Naive thymus-derived CD4-positive, alpha-beta T cell (primary cell): ENCODE measurements at regions of chr10 and their contacts with region 1.

Region 1: GRCh38 chr10:132536971-132537712 is 445 bp upstream of the INPP5A start:
- DNase-seq: peak; percentile 100
- ATAC-seq: peak; percentile 94
- H3K4me3 ChIP-seq: peak overlapping the region; percentile 57
- H3K4me3 Mint-ChIP-seq: peak overlapping the region; percentile 66 to 98 (median 78)
- H3K27ac ChIP-seq: peak overlapping the region; percentile 81
- H3K27ac Mint-ChIP-seq: peak overlapping the region in 3 of 9 donors; percentile 72 to 78 (median 76)
- H3K4me1 ChIP-seq: peaks cover 11 to 41% of the 10 kb centered on the region in 2 donors
- H3K4me1 Mint-ChIP-seq: peaks cover 33 to 53% (median 42%) of the 10 kb centered on the region in 7 donors
- H3K27me3 ChIP-seq: no peaks in the 10 kb centered on the region
- H3K27me3 Mint-ChIP-seq: peaks cover 0 to 27% (median 0%) of the 10 kb centered on the region in 5 donors

Region 2: DNA sequence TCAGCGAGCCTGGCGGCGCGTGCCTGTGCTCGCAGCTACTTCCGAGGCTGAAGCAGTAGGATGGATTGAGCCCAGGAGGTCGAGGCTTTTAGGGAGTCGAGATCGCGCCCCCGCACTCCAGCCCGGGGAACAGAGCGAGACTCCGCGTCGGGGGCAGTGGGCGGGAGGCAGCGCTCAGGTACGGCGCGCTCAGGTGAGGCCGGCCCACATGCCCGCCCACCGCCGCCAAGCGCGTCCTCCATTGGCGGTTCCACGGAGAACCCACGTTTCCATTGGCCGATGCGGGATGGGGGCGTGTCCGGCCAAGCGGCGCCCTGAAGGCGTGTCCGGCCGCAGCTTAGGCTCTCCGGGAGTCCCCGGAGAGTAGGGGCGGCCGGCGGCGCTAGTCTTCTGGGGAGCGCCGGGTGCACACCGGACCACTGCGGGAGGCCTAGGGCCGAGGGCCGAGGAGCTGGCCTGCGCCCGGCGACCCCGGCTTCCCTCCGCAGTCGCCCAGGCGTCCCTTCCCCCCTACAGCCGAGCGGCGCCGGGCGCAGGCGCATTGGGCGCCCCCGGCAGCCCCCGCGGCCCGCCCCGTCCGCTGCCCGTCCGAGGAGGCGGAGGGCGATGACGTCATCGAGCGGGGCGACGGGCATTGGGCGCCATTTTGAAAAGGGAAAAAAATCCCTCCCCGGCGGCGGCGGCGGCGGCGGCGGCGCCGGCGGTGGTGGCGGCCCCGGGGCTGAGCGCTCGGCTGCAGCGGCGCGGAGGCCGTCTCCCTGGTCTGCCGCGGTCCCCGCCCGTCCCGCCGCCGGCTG is 636.6 kb before region 1 on chr10 and contains the start of gene PPP2R2D:
- CTCF ChIA-PET with region 1: no interaction called
- POLR2A ChIA-PET with region 1: no interaction called
- intact Hi-C with region 1: loop called (anchors 1 to 5 kb)
- DNase-seq: peak; percentile 95 to 99 (median 97)
- ATAC-seq: peak; percentile 90
- H3K4me3 ChIP-seq: peak within 1 kb of the TSS; percentile 64
- H3K4me3 Mint-ChIP-seq: peak within 1 kb of the TSS; percentile 90 to 95 (median 92)
- H3K27ac ChIP-seq: peak within 1 kb of the TSS; percentile 94
- H3K27ac Mint-ChIP-seq: peak within 1 kb of the TSS; percentile 86 to 97 (median 93)
- H3K4me1 ChIP-seq: peaks cover 34 to 40% of the 10 kb centered on the region in 2 donors
- H3K4me1 Mint-ChIP-seq: peaks cover 30 to 67% (median 61%) of the 10 kb centered on the region in 7 donors
- H3K27me3 ChIP-seq: no peaks in the 10 kb centered on the region
- H3K27me3 Mint-ChIP-seq: peaks cover 0 to 18% (median 0%) of the 10 kb centered on the region in 5 donors
- total RNA-seq, gene PPP2R2D: 37.1 to 61.3 (median 40.1) TPM

Region 3: DNA sequence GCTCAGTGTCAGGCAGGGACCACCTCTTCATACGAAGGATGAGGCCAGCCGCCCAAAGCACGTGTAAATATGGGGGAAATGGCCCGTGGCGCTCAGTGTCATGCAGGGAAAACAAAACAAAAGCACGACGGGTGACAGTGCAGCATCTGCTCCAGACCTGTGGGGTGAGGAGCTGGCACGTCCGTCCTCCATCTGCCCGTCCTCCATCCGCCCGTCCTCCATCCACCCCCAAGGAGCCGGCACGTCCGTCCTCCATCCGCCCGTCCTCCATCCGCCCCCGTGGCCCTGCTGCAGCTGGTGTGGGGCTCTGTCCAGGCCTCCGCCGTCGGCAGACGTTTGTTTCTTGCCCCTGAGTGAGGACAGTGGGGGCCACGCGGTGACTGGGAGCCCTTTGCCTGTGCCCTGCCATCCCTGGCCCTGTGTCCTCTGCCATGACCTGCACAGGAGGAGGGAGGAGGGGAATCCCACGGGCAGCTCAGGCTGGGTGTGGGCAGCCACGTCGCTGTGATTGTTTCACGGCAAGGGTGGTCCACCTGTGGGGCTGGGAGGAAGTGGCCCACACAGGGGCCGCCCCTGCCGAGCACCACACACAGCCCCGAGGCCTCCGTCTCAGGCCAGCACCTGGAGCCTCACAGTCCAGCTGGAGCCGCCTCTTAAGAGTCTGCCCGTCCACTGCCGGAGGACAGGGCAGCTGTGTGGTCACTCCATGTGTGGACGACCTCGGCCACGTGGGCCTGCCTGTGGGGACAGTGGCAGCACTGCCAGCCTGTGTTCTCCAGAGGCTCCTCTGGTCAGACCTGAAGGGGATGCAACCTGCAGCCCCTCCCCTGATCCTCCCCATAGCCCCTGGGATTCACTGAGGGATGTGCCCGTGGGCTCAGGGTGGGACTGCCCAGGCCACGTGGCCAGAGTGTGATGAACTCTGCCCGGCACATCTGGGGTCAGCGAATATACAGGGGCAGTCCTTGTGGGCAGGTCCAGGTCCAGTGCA is 388.6 kb before region 1 on chr10:
- CTCF ChIA-PET with region 1: no interaction called
- POLR2A ChIA-PET with region 1: no interaction called
- intact Hi-C with region 1: no loop called
- DNase-seq: no peak
- ATAC-seq: peak; percentile 2
- H3K4me3 ChIP-seq: no peak overlapping the region
- H3K4me3 Mint-ChIP-seq: no peak overlapping the region
- H3K27ac ChIP-seq: no peak overlapping the region
- H3K27ac Mint-ChIP-seq: no peak overlapping the region
- H3K4me1 ChIP-seq: no peaks in the 10 kb centered on the region
- H3K4me1 Mint-ChIP-seq: peaks cover 0 to 2% (median 0%) of the 10 kb centered on the region in 7 donors
- H3K27me3 ChIP-seq: no peaks in the 10 kb centered on the region
- H3K27me3 Mint-ChIP-seq: peaks cover 0 to under 1% (median 0%) of the 10 kb centered on the region in 5 donors

Region 4: DNA sequence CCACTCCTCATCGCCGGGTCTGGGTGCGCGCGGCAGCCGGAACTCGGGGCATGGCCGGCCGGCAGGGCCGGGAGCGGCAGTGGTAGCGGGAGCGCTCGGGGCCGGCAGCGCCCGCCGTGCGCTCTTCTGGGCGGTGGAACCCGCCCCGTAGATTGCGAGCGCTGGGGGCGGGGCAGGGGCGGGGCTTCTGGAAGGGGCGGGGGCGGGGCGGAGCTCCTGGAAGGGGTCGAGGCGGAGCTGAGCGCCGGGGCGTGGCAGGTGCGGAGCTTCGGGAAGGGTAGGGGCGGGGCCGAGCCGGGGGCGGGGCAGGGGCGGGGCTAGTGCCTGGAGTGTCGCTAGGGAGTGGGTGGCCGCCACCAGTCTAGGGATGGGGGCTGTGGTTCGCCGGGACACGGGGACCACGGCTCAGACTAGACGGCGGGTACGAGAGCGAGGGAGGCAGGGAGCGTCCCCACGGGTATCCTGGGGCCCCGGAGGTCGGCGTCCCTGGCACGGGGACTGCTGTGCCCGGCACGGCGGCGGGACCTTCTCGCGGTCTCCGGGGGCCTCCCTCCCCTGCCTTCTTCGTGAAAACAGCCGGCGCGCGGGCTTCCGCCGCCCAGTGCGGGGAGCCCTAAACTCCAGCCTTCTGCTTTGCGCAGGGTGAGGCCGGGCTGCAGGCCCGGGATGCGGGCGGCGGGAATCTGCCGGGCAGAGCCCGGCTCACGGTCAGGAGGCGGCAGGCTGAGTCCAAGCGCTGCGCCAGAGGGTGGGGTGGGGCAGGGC is 229.1 kb before region 1 on chr10 and contains the start of gene STK32C:
- CTCF ChIA-PET with region 1: no interaction called
- POLR2A ChIA-PET with region 1: no interaction called
- intact Hi-C with region 1: loop called (anchors 1 kb)
- DNase-seq: peak; percentile 76 to 89 (median 87)
- ATAC-seq: peak; percentile 97
- H3K4me3 ChIP-seq: peak within 1 kb of the TSS; percentile 65
- H3K4me3 Mint-ChIP-seq: peak within 1 kb of the TSS; percentile 83 to 93 (median 86)
- H3K27ac ChIP-seq: peak within 1 kb of the TSS; percentile 73
- H3K27ac Mint-ChIP-seq: peak within 1 kb of the TSS in 6 of 9 donors; percentile 17 to 77 (median 56)
- H3K4me1 ChIP-seq: peaks cover 4 to 6% of the 10 kb centered on the region in 2 donors
- H3K4me1 Mint-ChIP-seq: peaks cover 0 to 20% (median 12%) of the 10 kb centered on the region in 7 donors
- H3K27me3 ChIP-seq: no peaks in the 10 kb centered on the region
- H3K27me3 Mint-ChIP-seq: peaks cover 0 to 46% (median 0%) of the 10 kb centered on the region in 5 donors
- total RNA-seq, gene STK32C: 8.7 to 19.4 (median 12.0) TPM

Region 5: GRCh38 chr10:132326016-132326889 is 210.9 kb before region 1 on chr10:
- CTCF ChIA-PET with region 1: no interaction called
- POLR2A ChIA-PET with region 1: no interaction called
- intact Hi-C with region 1: no loop called
- DNase-seq: no peak
- ATAC-seq: no peak
- H3K4me3 ChIP-seq: no peak overlapping the region
- H3K4me3 Mint-ChIP-seq: no peak overlapping the region
- H3K27ac ChIP-seq: no peak overlapping the region
- H3K27ac Mint-ChIP-seq: peak overlapping the region in 1 of 9 donors; percentile 61
- H3K4me1 ChIP-seq: peaks cover 0 to 10% of the 10 kb centered on the region in 2 donors
- H3K4me1 Mint-ChIP-seq: peaks cover 41 to 60% (median 51%) of the 10 kb centered on the region in 7 donors
- H3K27me3 ChIP-seq: no peaks in the 10 kb centered on the region
- H3K27me3 Mint-ChIP-seq: no peaks in the 10 kb centered on the region

Region 6: GRCh38 chr10:132452631-132453469 is 84.3 kb before region 1 on chr10:
- CTCF ChIA-PET with region 1: interaction called, 4 read pairs
- POLR2A ChIA-PET with region 1: no interaction called
- intact Hi-C with region 1: loop called (anchors 1 kb)
- DNase-seq: peak; percentile 87 to 96 (median 93)
- ATAC-seq: peak; percentile 94
- H3K4me3 ChIP-seq: peak overlapping the region; percentile 31
- H3K4me3 Mint-ChIP-seq: peak overlapping the region; percentile 33 to 72 (median 62)
- H3K27ac ChIP-seq: peak overlapping the region; percentile 88
- H3K27ac Mint-ChIP-seq: peak overlapping the region; percentile 85 to 97 (median 93)
- H3K4me1 ChIP-seq: peaks cover 13 to 23% of the 10 kb centered on the region in 2 donors
- H3K4me1 Mint-ChIP-seq: peaks cover 11 to 34% (median 23%) of the 10 kb centered on the region in 7 donors
- H3K27me3 ChIP-seq: no peaks in the 10 kb centered on the region
- H3K27me3 Mint-ChIP-seq: no peaks in the 10 kb centered on the region

Region 7: GRCh38 chr10:132616170-132616995 is 79.2 kb after region 1 on chr10:
- CTCF ChIA-PET with region 1: no interaction called
- POLR2A ChIA-PET with region 1: no interaction called
- intact Hi-C with region 1: loop called in 1 of 2 experiments (anchors 1 kb)
- DNase-seq: peak in 8 of 9 donors; percentile 64 to 78 (median 70)
- ATAC-seq: peak; percentile 85
- H3K4me3 ChIP-seq: no peak overlapping the region
- H3K4me3 Mint-ChIP-seq: peak overlapping the region; percentile 1 to 83 (median 56)
- H3K27ac ChIP-seq: no peak overlapping the region
- H3K27ac Mint-ChIP-seq: peak overlapping the region; percentile 40 to 95 (median 88)
- H3K4me1 ChIP-seq: peaks cover 12 to 18% of the 10 kb centered on the region in 2 donors
- H3K4me1 Mint-ChIP-seq: peaks cover 22 to 38% (median 28%) of the 10 kb centered on the region in 7 donors
- H3K27me3 ChIP-seq: no peaks in the 10 kb centered on the region
- H3K27me3 Mint-ChIP-seq: peaks cover 0 to 11% (median 0%) of the 10 kb centered on the region in 5 donors

Region 8: GRCh38 chr10:133309111-133309719 is 772.1 kb after region 1 on chr10:
- CTCF ChIA-PET with region 1: no interaction called
- POLR2A ChIA-PET with region 1: no interaction called
- intact Hi-C with region 1: loop called in 1 of 2 experiments (anchors 1 kb)
- DNase-seq: peak; percentile 92 to 99 (median 95)
- ATAC-seq: peak; percentile 90
- H3K4me3 ChIP-seq: peak overlapping the region; percentile 66
- H3K4me3 Mint-ChIP-seq: peak overlapping the region; percentile 53 to 97 (median 77)
- H3K27ac ChIP-seq: peak overlapping the region; percentile 100
- H3K27ac Mint-ChIP-seq: peak overlapping the region in 8 of 9 donors; percentile 72 to 98 (median 88)
- H3K4me1 ChIP-seq: peaks cover 8 to 10% of the 10 kb centered on the region in 2 donors
- H3K4me1 Mint-ChIP-seq: peaks cover 12 to 39% (median 30%) of the 10 kb centered on the region in 7 donors
- H3K27me3 ChIP-seq: no peaks in the 10 kb centered on the region
- H3K27me3 Mint-ChIP-seq: peaks cover 0 to 5% (median 0%) of the 10 kb centered on the region in 5 donors